Cardiac septum (tissue), 1 donor: ENCODE measurements at regions of chr4 and their contacts with region 1.

Region 1: GRCh38 chr4:40056716-40057585 is at the start of gene N4BP2:
- DNase-seq: peak; percentile 90
- total RNA-seq, gene N4BP2: 5.2 TPM

Region 2: GRCh38 chr4:39458505-39459300 is 598.2 kb before region 1 on chr4 and contains the starts of genes LIAS and RPL9:
- intact Hi-C with region 1: loop called (anchors 5 kb)
- DNase-seq: peak; percentile 97
- total RNA-seq, gene LIAS: 15.2 TPM
- total RNA-seq, gene RPL9: 532 TPM

Region 3: GRCh38 chr4:39697740-39698423 is 359.1 kb before region 1 on chr4 and contains the start of gene UBE2K:
- intact Hi-C with region 1: loop called (anchors 1 kb)
- DNase-seq: peak; percentile 94
- total RNA-seq, gene UBE2K: 57.0 TPM

Region 4: DNA sequence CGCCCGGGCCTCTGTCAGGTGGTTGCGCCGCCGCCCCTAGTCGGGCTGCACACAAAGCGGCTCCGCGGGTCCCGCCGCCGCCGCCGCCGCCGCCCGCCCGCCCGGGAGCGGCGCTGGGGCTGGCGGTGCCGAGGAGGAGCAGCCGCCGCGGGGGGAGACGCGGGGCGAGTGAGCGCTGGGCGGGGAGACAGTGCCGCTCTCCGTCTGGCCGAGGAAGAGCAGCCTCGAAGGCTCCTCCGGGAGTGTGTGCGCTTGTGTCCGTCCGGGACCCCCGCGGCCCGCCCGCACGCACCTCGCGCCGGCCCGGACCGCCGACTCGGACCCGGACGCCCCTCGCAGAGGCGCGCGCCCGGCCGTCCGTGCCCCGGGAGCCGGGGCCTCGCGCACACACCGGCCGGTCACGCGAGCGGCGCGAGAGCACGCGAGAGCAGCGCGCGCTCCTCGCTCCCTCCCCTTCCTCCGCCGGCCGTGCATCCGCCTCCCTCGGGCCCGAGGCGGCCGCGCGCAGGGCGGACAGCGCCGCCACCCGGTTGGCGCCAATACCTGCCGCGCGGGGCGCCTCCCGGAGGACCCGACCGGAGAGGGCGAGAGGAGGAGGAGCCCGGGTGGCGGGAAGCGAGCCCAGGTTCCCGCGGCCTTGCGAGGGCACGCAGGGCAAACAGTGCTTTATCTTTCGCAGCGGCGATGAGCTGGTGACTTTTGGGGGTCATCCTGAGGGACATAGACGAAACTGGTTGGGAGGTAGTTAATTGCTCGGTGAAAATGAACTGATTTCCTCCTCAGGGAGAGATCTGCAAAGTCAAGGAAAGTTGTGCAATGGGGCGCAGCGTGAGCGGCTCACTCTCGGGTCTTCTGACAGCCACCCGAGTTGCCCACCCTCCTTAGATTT is 79.2 kb before region 1 on chr4 and contains the start of gene PDS5A:
- intact Hi-C with region 1: loop called (anchors 2 kb)
- DNase-seq: peak; percentile 95
- total RNA-seq, gene PDS5A: 33.1 TPM

Region 5: DNA sequence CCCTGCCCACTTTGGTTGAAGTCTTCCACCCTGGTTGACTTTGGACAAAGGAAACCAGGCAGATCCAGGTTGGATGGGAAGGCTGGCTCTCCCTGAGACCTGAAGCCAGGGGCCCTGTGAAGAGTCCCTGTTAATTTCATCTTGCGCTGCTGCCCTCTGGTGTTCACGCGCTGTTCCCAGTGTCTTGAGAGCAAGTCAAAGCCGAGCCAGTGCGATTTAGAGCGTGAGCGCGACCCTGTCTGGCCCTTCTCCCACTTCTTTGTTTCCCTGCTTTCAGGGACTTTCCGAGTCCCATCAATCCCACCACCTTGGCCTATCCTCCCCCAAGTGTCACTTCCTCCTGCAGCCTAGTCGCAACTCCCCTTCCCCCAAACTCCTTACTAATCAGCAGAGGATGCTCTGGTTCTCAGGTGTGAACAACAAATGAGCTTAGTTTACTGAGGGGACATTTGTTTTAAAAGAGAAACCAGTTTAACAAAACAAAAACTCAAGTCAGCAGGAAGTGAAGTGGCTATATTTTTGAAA is 252.4 kb after region 1 on chr4:
- intact Hi-C with region 1: loop called (anchors 5 kb)
- DNase-seq: peak; percentile 93